Gastrocnemius medialis (tissue), 4 donors: ENCODE measurements at regions of chr19 and their contacts with region 1.

Region 1: DNA sequence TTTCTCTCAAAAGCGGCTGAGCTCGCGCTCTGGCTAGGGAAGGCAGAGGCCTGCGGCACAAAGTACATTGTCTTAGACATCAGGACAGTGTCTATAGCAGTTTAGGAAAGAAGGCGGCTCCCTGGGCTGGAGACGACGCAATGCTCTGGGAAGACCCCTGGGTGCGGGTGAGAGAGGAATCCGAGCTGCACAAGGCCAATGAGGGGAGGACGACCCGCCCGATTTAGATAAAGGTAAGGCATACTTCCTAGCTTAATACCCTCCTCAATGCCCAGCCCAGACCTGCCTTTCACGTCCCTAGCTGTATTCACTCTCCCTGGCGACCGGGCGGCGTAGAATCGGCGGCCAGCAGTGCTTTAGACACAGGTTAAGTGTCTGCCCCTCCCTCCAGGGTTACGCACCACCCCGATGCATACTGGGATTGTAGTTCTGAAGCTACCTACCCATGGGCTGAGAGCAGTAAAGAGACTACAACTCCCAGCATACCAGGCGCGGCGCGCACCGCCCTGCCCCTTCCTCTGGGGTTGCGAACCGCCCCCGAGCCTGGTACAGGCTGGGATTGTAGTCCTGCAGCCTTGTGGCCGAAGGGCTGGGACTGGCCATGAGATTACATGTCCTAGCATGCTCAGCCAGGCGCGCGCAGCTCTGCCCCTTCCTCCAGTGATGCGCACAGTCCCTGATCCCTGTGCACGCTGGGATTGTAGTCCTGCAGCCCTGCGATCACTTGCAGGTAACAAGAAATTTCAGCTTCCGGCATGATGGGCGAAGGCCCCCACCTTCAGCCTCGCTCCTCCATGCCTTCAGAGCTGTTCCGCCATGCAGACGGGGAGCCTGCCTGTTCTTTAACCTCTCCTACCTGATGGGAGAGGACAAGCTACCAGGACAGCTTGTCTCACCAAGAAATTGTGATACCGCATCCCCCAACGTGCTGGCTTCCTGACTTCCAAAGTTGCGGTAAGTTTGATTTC is 43.4 kb upstream of the ZNF14 start:
- DNase-seq: peak; percentile 95 to 97
- ATAC-seq: peak; percentile 100
- H3K4me3 ChIP-seq: peak overlapping the region; percentile 62 to 83 (median 82)
- H3K27ac ChIP-seq: peak overlapping the region; percentile 75 to 87 (median 80)
- H3K4me1 ChIP-seq: peaks cover 14 to 19% of the 10 kb centered on the region in 2 donors
- H3K27me3 ChIP-seq: no peaks in the 10 kb centered on the region
- CTCF ChIP-seq: peak in 2 of 5 experiments; percentile 10 to 25
- POLR2A ChIP-seq: peak; percentile 14 to 33

Region 2: GRCh38 chr19:19732579-19733501 is 43.5 kb before region 1 on chr19 and contains the start of gene ZNF14:
- in situ Hi-C with region 1: no loop called
- intact Hi-C with region 1: loop called (anchors 1 kb)
- DNase-seq: peak; percentile 81 to 87
- ATAC-seq: peak; percentile 99 to 100
- H3K4me3 ChIP-seq: peak within 1 kb of the TSS; percentile 75 to 99 (median 82)
- H3K27ac ChIP-seq: peak within 1 kb of the TSS; percentile 43 to 72 (median 60)
- H3K4me1 ChIP-seq: peaks cover 0 to 4% of the 10 kb centered on the region in 2 donors
- H3K27me3 ChIP-seq: no peaks in the 10 kb centered on the region
- CTCF ChIP-seq: no peak
- POLR2A ChIP-seq: peak; percentile 45 to 62
- total RNA-seq, gene ZNF14: 0.97 to 2.1 (median 1.7) TPM

Region 3: DNA sequence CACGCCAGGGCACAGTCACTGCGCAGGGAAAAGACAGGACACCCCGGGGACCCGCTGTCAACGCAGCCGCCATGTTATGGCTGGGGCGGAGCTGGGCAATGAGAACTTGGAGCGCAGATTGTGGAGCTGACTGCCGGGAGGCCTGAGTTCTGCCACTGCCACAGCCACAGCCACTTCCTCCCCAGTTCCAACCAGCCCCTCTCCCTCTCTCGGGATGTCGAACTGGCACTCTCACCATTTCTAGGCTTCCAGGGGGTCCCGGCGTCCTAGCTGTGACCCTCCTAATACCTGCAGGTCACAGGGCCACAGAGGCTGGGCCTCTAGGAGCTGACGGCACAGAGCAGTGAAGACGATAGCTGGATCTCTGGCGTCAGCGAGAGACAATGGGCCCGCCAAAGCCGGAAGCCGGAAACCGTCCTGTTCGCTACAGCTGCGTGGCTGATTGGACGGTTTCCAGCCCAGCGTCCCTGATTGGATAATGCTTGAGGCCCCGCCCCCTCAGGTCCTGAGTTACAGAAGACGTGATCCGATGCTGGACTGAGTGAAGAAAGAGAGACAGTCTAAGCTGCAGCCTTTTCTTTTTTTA is 45.1 kb after region 1 on chr19 and contains the start of gene ZNF506:
- in situ Hi-C with region 1: loop called in 1 of 4 experiments (anchors 5 kb)
- intact Hi-C with region 1: loop called (anchors 2 kb)
- DNase-seq: peak; percentile 98
- ATAC-seq: peak; percentile 99
- H3K4me3 ChIP-seq: peak within 1 kb of the TSS; percentile 66 to 87 (median 77)
- H3K27ac ChIP-seq: peak within 1 kb of the TSS; percentile 90 to 93 (median 92)
- H3K4me1 ChIP-seq: peaks cover 3 to 10% of the 10 kb centered on the region in 2 donors
- H3K27me3 ChIP-seq: no peaks in the 10 kb centered on the region
- CTCF ChIP-seq: no peak
- POLR2A ChIP-seq: peak; percentile 66 to 83
- total RNA-seq, gene ZNF506: 6.3 to 18.7 (median 14.9) TPM

Region 4: DNA sequence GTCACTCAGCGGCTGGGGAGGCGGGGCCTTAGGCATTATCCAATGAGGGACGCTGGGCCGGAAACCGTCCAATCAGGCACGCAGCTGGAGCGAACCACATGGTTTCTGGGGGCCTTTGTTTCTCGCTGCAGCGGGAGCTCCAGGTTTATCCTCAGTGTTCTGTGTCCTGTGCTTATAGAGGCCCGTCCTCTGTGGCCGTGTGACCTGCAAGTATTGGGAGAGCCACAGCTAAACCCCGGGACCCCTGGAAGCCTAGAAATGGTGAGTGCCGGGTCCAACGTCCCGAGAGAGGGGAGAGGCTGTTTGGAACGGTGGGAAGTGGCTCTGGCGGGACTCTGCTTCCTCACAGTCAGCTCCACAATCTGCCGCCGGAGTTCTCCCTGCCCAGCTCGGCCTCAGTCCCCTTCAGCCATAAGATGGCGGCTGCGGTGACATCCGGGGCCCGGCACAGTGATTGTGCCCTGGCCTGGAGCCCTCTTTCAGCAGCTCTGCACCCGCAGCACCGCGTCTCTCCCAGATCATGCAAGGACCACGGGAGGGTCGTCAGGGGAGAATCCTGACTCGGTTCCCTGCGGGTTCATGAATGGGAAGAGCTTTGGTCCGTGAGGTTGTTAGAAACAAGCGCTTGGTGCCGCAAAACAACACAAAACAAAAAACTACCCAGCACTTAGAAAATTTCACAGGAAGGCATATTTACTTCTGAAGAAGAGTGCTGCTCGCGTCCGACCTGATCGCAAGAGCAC is 89.6 kb after region 1 on chr19 and contains the start of gene ZNF253:
- in situ Hi-C with region 1: no loop called
- intact Hi-C with region 1: loop called (anchors 2 kb)
- DNase-seq: peak; percentile 95 to 97
- ATAC-seq: peak; percentile 98 to 99
- H3K4me3 ChIP-seq: peak within 1 kb of the TSS; percentile 74 to 85 (median 80)
- H3K27ac ChIP-seq: peak within 1 kb of the TSS; percentile 93 to 96 (median 94)
- H3K4me1 ChIP-seq: peaks cover 25 to 28% of the 10 kb centered on the region in 2 donors
- H3K27me3 ChIP-seq: no peaks in the 10 kb centered on the region
- CTCF ChIP-seq: no peak
- POLR2A ChIP-seq: peak; percentile 82 to 97
- total RNA-seq, gene ZNF253: 3.1 to 9.5 (median 6.3) TPM

Region 5: GRCh38 chr19:20039203-20039723 is 262.9 kb after region 1 on chr19 and contains the start of gene ZNF682:
- in situ Hi-C with region 1: no loop called
- intact Hi-C with region 1: loop called (anchors 2 kb)
- DNase-seq: peak; percentile 82 to 84
- ATAC-seq: peak; percentile 99
- H3K4me3 ChIP-seq: peak within 1 kb of the TSS; percentile 63 to 73 (median 69)
- H3K27ac ChIP-seq: peak within 1 kb of the TSS; percentile 40 to 82 (median 60)
- H3K4me1 ChIP-seq: peaks cover 9% of the 10 kb centered on the region in 2 donors
- H3K27me3 ChIP-seq: no peaks in the 10 kb centered on the region
- CTCF ChIP-seq: no peak
- POLR2A ChIP-seq: peak in 1 of 2 donors; percentile 11
- total RNA-seq, gene ZNF682: 0.44 to 6.3 TPM in 2 of 4 donors, not detected in the others

Region 6: DNA sequence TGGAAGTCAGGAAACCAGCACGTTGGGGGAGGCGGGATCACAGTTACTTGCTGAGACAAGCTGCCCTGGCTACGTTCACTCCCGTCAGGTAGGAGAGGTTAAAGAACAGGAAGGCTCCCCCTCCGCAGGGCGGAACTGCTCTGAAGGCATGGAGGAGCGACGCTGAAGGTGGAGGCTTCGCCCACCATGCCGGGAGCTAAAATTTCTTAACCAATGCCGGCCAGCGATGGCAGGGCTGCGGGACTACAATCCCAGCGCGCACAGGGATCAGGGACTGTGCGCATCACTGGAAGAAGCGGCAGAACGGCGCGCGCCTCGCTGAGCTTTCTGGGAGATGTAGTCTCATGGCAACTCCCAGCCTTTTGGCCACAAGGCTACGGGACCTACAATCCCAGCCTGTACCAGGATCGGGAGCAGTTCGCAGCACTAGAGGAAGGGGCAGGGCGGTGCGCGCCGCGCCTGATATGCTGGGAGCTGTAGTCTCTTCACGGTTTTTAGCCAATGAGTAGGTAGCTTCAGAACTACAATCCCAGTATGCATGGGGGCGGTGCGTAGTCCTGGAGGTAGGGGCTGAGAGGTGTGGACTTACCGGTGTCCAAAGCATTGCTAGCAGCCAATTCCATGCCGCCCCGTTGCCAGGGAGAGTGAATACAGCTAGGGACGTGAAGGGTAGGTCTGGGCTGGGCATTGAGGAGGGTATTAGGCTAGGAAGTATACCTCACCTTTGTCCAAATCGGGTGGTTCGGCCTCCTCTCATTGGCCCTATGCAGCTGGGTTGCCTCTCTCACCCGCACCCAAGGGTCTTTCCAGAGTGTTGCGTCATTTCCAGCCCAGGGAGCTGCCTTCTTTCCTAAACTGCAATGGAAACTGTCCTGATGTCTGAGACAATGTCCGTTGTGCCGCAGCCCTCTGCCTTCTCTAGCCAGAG is 275.8 kb after region 1 on chr19:
- in situ Hi-C with region 1: no loop called
- intact Hi-C with region 1: loop called (anchors 5 kb)
- DNase-seq: peak; percentile 85 to 86
- ATAC-seq: peak; percentile 98 to 100
- H3K4me3 ChIP-seq: peak overlapping the region; percentile 51 to 70 (median 62)
- H3K27ac ChIP-seq: peak overlapping the region; percentile 49 to 82 (median 64)
- H3K4me1 ChIP-seq: peaks cover 0 to 3% of the 10 kb centered on the region in 2 donors
- H3K27me3 ChIP-seq: no peaks in the 10 kb centered on the region
- CTCF ChIP-seq: no peak
- POLR2A ChIP-seq: peak in 1 of 2 donors; percentile 28